Calu3 (cell line): ENCODE measurements at regions of chr1 and their contacts with region 1.

Region 1: DNA sequence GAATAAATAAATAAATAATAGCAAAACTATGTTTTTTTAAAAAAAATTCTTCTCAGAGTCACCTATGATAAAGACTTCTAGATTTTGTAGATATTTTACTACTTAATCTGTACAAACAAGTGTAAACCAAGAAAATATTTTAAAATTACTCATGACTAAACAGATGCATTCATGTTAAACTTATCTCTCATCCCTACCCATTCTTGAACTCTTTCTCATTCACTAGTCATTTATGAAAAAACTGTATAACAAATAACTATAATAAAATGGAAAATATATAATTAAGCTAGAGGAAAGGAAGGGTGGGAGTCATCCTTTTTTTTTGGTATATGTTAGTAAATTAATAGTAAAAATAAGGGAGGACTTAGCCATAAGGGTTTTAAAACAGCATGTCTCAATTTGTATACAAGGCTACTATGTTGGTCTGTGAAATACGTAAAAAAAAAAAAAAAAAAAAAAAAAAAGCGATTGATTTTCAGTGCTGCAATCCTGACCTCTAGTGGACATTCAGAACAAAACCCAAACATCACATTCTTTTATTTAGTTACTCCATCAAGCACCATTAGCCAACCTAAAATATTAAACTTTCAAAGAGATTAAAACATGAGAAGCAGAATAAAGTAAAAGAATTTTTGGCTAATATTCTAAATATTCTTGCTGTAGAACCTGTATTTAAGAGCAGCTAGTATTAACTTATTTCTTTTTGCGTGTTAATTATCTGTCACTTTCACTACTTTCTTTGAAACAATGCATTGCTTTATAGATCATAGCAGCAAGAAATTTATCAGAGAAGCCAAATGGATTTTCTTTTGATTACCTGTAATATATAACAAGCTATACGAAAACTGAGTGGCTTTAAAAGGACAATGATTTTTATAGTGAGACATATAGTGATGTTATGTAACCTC is 255.8 kb upstream of the CACYBP start:
- DNase-seq: no peak
- H3K4me3 Mint-ChIP-seq: no peak overlapping the region
- H3K27ac Mint-ChIP-seq: no peak overlapping the region
- H3K4me1 Mint-ChIP-seq: no peaks in the 10 kb centered on the region
- H3K27me3 Mint-ChIP-seq: no peaks in the 10 kb centered on the region
- CTCF ChIP-seq: peak; percentile 56

Region 2: GRCh38 chr1:174262349-174263241 is 481.3 kb before region 1 on chr1:
- CTCF ChIA-PET with region 1: interaction called, 6 read pairs
- intact Hi-C with region 1: loop called (anchors 1 kb)
- DNase-seq: peak; percentile 35
- H3K4me3 Mint-ChIP-seq: no peak overlapping the region
- H3K27ac Mint-ChIP-seq: no peak overlapping the region
- H3K4me1 Mint-ChIP-seq: no peaks in the 10 kb centered on the region
- H3K27me3 Mint-ChIP-seq: no peaks in the 10 kb centered on the region
- CTCF ChIP-seq: peak; percentile 55